Aorta (tissue), 5 donors: ENCODE measurements at regions of chr19 and their contacts with region 1.

Region 1: GRCh38 chr19:3984908-3985642 is at the start of gene EEF2:
- DNase-seq: peak; percentile 92 to 96
- ATAC-seq: peak; percentile 92
- H3K4me3 ChIP-seq: peak within 1 kb of the TSS; percentile 68 to 79
- H3K27ac ChIP-seq: peak within 1 kb of the TSS; percentile 45 to 81
- H3K4me1 ChIP-seq: peaks cover 0 to 5% of the 10 kb centered on the region in 2 donors
- H3K27me3 ChIP-seq: no peaks in the 10 kb centered on the region
- total RNA-seq, gene EEF2: 1,616 to 1,851 TPM

Region 2: GRCh38 chr19:3762501-3763459 is 222.3 kb before region 1 on chr19 and contains the start of gene MRPL54:
- intact Hi-C with region 1: loop called in 1 of 2 experiments (anchors 5 kb)
- DNase-seq: peak; percentile 99 to 100
- ATAC-seq: peak; percentile 96
- H3K4me3 ChIP-seq: peak within 1 kb of the TSS; percentile 64 to 98
- H3K27ac ChIP-seq: peak within 1 kb of the TSS; percentile 73 to 79
- H3K4me1 ChIP-seq: no peaks in the 10 kb centered on the region
- H3K27me3 ChIP-seq: no peaks in the 10 kb centered on the region
- total RNA-seq, gene MRPL54: 39.6 to 40.7 TPM

Region 3: GRCh38 chr19:3970808-3971598 is 14.1 kb before region 1 on chr19 and contains the start of gene DAPK3:
- intact Hi-C with region 1: loop called in 1 of 2 experiments (anchors 1 kb)
- DNase-seq: peak; percentile 99
- ATAC-seq: peak; percentile 94
- H3K4me3 ChIP-seq: peak within 1 kb of the TSS; percentile 71 to 98
- H3K27ac ChIP-seq: peak within 1 kb of the TSS; percentile 92 to 94
- H3K4me1 ChIP-seq: no peaks in the 10 kb centered on the region
- H3K27me3 ChIP-seq: no peaks in the 10 kb centered on the region
- total RNA-seq, gene DAPK3: 118 to 197 TPM

Region 4: DNA sequence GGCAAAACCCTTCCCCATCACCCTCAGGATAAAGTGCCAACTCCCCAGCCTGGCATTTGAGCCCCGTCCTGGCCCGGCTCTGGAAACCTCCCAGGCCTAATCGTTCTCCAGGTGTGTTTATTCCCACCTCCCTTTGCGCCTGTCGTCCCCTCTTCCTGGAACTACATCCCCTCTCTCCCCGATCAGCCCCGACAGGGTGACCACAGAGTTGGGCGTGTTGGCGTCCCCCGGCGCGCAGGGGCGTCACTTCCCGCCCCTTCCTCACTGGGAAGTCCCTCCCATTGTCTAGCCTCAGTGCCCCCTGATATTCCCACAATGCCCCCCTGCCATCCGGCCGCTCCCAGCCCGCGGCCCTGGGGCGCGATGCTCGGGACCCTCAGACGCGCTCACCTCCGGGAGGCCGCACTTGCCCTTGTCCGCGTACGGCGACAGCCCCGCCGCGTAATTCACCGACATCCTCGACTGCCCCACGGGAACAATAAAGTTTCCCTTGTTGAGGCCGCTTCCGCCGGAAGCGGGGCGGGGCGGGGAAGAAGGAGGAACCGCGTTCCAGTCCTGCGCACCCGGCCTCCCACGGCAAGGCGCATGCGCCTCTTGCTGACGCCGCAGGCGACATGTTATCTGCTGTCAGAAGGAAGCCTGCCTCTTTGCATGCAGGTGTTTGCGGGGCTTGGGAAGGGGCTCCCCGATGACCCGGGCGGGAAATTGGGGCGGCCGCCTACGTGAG is 197.2 kb after region 1 on chr19 and contains the starts of genes ANKRD24 and SIRT6:
- intact Hi-C with region 1: loop called in 1 of 2 experiments (anchors 5 kb)
- DNase-seq: peak; percentile 98 to 99
- ATAC-seq: peak; percentile 93
- H3K4me3 ChIP-seq: peak within 1 kb of the TSS; percentile 65 to 80
- H3K27ac ChIP-seq: no peak within 1 kb of the TSS
- H3K4me1 ChIP-seq: no peaks in the 10 kb centered on the region
- H3K27me3 ChIP-seq: no peaks in the 10 kb centered on the region
- total RNA-seq, gene ANKRD24: 0.29 to 0.63 TPM
- total RNA-seq, gene SIRT6: 19.4 to 23.5 TPM

Region 5: GRCh38 chr19:4199699-4200293 is 214.7 kb after region 1 on chr19:
- intact Hi-C with region 1: loop called (anchors 5 kb)
- DNase-seq: no peak
- ATAC-seq: peak; percentile 44
- H3K4me3 ChIP-seq: no peak overlapping the region
- H3K27ac ChIP-seq: no peak overlapping the region
- H3K4me1 ChIP-seq: no peaks in the 10 kb centered on the region
- H3K27me3 ChIP-seq: no peaks in the 10 kb centered on the region